ENCODE measurements at regions of chr2 and their contacts with region 1.

Region 1: DNA sequence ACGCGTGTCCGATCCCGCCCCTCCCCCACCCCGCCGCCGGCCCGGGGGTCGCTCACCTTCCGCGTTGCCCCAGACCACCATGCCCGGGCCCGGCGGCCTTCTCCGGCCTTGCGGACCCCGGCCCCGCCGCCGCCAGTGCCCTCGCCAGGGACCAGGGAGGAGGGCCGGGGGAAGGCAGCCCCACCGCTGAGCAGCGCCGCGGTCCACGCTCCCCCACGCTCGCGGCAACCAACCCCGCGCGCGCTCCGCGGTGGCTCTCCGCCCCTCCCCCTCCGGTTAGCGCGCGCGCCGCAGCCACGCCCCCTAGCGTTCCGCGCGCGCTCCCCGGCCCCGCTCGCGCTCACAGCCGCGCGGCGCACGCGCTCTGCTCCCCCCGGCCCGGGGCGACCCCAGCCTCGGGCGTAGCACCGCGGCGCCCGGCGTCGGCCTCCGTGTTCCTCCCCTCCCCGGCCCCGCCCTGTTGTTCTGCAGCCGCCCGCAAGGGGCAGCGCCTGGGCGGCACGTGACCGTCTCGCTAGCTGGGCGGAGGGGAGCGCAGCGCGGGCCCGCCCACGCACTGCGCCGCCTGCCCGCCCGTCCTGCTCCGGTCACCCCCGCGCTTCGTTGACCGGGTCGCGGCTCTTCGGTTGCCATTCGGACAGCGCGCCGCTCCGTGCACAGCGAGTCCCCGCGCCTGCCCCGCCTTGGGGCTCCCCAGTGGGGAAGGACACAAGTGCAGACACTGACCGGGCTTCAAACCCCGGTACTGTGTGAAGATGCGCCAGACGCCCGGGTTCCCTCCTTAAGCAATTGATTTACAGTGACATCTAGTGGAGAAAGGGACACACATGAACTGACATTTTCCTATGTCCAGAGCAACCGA is at the start of gene REV1:
- DNase-seq: peak; percentile 97
- H3K4me3 ChIP-seq: peak within 1 kb of the TSS; percentile 74
- H3K27ac ChIP-seq: peak within 1 kb of the TSS; percentile 73
- H3K4me1 ChIP-seq: peaks cover 11% of the 10 kb centered on the region
- H3K27me3 ChIP-seq: no peaks in the 10 kb centered on the region
- CTCF ChIP-seq: peak; percentile 76
- total RNA-seq, gene REV1: 38.1 and 41.2 TPM in 2 replicates

Region 2: GRCh38 chr2:98649135-98649991 is 840.6 kb before region 1 on chr2:
- CTCF ChIA-PET with region 1: interaction called, 5 read pairs
- POLR2A ChIA-PET with region 1: no interaction called
- intact Hi-C with region 1: loop called (anchors 10 kb)
- DNase-seq: peak; percentile 82
- H3K4me3 ChIP-seq: no peak overlapping the region
- H3K27ac ChIP-seq: no peak overlapping the region
- H3K4me1 ChIP-seq: no peaks in the 10 kb centered on the region
- H3K27me3 ChIP-seq: peaks cover 8% of the 10 kb centered on the region
- CTCF ChIP-seq: peak; percentile 95

Region 3: DNA sequence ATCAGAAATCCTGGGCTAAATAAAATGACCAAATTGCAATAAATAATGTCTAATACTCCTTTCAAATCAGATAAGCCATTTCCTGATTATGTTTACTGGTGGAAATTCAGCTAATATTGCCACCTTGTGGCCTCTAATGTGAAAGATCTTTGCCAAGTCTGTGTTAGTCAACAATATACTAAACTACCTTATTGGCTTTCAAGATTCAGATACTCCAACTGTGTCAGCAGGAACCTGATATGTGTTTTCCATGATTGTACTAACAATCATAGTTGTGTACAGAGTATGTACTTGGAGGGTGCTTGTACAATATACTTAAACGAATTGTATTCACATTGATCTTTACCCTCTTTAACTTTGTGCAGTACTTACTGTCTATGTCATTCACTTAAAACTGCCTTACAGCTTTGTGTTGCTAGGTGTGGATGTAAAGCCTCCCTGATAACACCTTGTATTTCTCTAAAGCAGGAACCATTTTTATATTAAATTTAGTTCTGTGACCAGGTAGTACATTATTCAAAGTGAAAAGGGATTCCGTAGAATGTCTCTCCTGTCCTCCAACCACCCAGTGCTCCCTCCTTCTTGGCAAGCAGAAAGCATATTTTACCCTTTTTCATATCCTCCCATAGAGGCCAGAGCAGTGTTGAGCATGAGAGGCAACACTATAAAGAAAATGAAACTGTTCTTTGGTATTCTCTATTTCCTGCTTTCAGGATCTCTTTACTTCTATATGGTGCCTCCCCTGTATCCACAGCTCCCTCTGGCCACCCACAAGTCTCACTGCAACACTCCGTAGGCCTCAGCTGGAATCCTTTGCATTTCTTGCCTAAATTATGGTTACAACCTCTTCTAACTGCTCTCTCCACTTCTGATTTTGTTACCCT is 423.7 kb before region 1 on chr2:
- CTCF ChIA-PET with region 1: no interaction called
- POLR2A ChIA-PET with region 1: no interaction called
- intact Hi-C with region 1: loop called (anchors 10 kb)
- DNase-seq: peak; percentile 51
- H3K4me3 ChIP-seq: no peak overlapping the region
- H3K27ac ChIP-seq: no peak overlapping the region
- H3K4me1 ChIP-seq: peaks cover 3% of the 10 kb centered on the region
- H3K27me3 ChIP-seq: peaks cover 7% of the 10 kb centered on the region
- CTCF ChIP-seq: peak; percentile 60

Region 4: DNA sequence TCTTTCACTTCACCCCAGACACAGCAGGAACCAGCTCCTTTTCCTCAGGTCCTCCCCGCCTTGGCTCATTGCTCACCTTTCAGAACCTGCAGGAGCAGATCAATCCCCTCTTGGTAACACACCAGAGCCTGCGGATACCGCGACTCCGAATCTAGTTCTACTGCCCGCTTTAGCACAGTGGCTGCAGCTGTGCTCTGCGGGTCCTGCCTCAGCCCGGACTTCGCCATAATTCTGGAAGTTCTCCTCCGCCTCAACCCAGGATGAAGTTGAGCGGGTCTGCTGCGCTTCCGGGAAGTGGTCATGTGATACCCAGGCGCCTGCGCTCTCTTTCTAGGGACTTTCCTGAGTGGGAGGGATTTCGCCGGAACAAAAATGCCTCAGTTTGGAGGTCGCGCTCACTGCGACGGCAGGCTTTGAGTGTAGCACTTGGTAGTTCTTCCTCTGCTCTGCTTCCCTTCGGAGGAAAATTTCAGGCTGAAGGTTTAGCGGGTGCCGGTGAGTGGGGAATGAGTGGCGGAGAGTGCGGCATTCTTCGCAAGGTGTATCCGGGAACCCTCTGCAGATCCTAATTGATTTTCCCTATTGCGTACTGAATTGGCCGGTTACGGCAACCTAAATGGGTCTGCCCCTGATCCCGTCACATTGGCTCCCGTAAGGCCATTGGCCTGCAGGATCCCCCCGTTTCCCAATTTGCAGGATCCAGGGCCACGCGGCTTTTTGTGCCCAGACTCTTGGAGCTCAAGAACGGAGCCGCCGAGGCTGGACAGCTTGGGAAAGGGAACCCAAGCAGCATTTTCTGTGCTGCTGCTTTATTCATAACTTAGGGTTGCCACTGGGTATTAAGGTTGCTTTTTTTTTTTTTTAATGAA is 309.0 kb before region 1 on chr2 and contains the starts of genes MITD1 and MRPL30:
- CTCF ChIA-PET with region 1: no interaction called
- POLR2A ChIA-PET with region 1: no interaction called
- intact Hi-C with region 1: loop called (anchors 1 kb)
- DNase-seq: peak; percentile 97
- H3K4me3 ChIP-seq: peak within 1 kb of the TSS; percentile 81
- H3K27ac ChIP-seq: peak within 1 kb of the TSS; percentile 68
- H3K4me1 ChIP-seq: peaks cover 13% of the 10 kb centered on the region
- H3K27me3 ChIP-seq: no peaks in the 10 kb centered on the region
- CTCF ChIP-seq: no peak
- total RNA-seq, gene MITD1: 22.3 and 25.3 TPM in 2 replicates
- total RNA-seq, gene MRPL30: 55.4 and 59.9 TPM in 2 replicates

Region 5: DNA sequence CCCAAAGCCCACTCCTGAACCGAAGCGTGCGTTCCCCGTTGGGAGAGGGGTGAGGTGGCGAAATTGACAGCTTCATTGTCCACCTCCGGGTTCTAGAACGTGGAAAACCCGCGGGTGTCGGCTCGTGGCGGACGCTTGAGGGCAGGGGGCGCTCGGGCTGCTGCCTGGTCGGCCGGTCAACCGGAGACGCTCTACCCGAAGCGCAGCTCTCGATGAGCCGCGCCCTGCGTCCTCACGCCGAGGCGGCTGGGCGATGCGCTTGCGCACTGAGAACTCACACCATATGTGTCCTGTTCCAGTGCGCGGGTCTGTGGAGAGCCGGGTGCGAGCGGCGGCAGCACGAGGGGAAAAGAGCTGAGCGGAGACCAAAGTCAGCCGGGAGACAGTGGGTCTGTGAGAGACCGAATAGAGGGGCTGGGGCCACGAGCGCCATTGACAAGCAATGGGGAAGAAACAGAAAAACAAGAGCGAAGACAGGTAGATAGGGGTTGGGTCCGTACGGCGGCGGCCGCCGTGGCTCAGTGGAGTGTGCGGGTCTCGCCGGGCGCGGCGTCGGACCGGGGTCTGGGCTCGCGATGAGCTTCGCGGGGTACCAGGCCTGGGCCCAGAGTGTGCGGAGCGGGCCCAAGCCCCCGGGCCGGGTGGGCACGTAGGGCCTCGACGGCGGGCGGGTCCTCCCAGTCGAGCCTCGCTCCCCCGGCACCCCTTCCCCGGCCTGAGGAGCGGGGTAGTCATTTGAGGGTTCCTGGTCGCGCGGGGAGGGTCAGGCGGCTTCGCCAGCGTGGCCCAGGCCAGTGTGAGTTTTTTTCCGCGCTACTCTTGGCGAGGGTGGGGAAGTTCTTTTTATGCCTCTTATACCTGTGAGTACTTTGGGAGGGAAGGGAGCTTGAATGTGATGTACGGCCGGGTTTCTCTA is 152.6 kb before region 1 on chr2 and contains the start of gene EIF5B:
- CTCF ChIA-PET with region 1: interaction called, 6 read pairs
- POLR2A ChIA-PET with region 1: no interaction called
- intact Hi-C with region 1: loop called (anchors 1 kb)
- DNase-seq: peak; percentile 98
- H3K4me3 ChIP-seq: peak within 1 kb of the TSS; percentile 71
- H3K27ac ChIP-seq: peak within 1 kb of the TSS; percentile 86
- H3K4me1 ChIP-seq: no peaks in the 10 kb centered on the region
- H3K27me3 ChIP-seq: no peaks in the 10 kb centered on the region
- CTCF ChIP-seq: peak; percentile 78
- total RNA-seq, gene EIF5B: 73.5 and 78.7 TPM in 2 replicates

Region 6: DNA sequence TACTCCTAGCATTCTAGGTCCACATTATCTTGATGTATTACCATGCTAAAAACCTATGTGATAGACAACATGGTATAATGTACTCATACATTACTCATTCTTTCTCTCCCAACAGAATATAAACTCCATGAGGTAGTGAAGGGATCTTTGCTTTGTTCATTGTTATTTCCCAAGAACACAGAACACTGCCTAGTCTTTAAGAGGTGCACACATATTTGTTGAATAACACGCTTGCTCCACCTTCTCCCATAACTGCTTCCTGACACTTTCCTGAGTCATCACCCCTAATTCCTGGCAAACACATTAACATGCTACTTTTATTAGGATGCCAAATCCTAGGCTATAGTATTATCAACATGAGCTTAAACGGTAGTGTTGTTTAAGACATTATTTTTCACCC is 41.4 kb before region 1 on chr2:
- CTCF ChIA-PET with region 1: no interaction called
- POLR2A ChIA-PET with region 1: no interaction called
- intact Hi-C with region 1: no loop called
- DNase-seq: no peak
- H3K4me3 ChIP-seq: no peak overlapping the region
- H3K27ac ChIP-seq: no peak overlapping the region
- H3K4me1 ChIP-seq: no peaks in the 10 kb centered on the region
- H3K27me3 ChIP-seq: no peaks in the 10 kb centered on the region
- CTCF ChIP-seq: no peak

Region 7: GRCh38 chr2:99537910-99538485 is 48.0 kb after region 1 on chr2:
- CTCF ChIA-PET with region 1: no interaction called
- POLR2A ChIA-PET with region 1: no interaction called
- intact Hi-C with region 1: no loop called
- DNase-seq: no peak
- H3K4me3 ChIP-seq: no peak overlapping the region
- H3K27ac ChIP-seq: no peak overlapping the region
- H3K4me1 ChIP-seq: no peaks in the 10 kb centered on the region
- H3K27me3 ChIP-seq: peaks cover 23% of the 10 kb centered on the region
- CTCF ChIP-seq: no peak

Measured in A673 (cell line).